ENCODE measurements at regions of chr2 and their contacts with region 1.

Region 1: DNA sequence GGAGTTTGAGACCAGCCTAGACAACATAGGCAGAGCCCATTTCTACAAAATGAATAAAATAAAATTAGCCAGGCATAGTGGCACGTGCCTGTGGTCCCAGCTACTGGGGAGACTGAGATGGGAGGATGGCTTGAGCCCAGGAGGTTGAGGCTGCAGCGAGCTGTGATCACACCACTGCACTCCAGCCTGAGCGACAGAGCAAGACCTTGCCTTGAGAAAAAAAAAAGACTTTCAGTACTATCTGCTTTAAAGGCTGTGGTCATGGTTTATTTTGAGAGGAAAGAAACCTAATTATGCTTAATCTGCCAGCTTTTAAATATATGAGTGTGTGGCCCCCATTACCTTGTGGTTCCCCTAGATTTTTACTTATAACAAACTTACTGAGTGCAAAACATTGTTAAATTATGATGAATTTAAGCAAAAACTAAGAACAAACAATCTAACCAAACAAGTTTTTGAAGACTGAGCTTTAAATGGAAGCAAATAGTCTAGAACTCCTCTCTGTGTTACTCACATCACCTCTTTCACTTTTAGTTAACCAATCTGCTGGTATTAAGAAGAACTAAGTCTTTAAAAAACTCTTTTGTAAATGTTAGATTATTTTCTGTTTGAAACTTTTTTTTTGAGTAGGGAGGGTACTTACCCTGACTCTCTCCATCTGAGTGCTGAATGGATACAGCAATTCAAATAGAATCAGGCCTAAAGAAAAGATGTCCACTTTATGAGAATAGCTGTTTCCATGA is 65.4 kb downstream of the EIF2AK3 start:
- DNase-seq: no peak
- ATAC-seq: no peak
- H3K4me3 ChIP-seq: no peak overlapping the region
- H3K4me3 Mint-ChIP-seq: no peak overlapping the region
- H3K27ac ChIP-seq: no peak overlapping the region
- H3K27ac Mint-ChIP-seq: peak overlapping the region; percentile 34 to 70
- H3K4me1 ChIP-seq: no peaks in the 10 kb centered on the region
- H3K4me1 Mint-ChIP-seq: peaks cover 0 to 3% (median 2%) of the 10 kb centered on the region in 3 donors
- H3K27me3 ChIP-seq: no peaks in the 10 kb centered on the region
- H3K27me3 Mint-ChIP-seq: no peaks in the 10 kb centered on the region

Region 2: GRCh38 chr2:88590998-88591613 is 29.3 kb after region 1 on chr2:
- CTCF ChIA-PET with region 1: no interaction called
- POLR2A ChIA-PET with region 1: no interaction called
- DNase-seq: peak in 24 of 35 experiments; percentile 1 to 71 (median 18)
- ATAC-seq: peak; percentile 60 to 72 (median 64)
- H3K4me3 ChIP-seq: no peak overlapping the region
- H3K4me3 Mint-ChIP-seq: no peak overlapping the region
- H3K27ac ChIP-seq: no peak overlapping the region
- H3K27ac Mint-ChIP-seq: no peak overlapping the region
- H3K4me1 ChIP-seq: no peaks in the 10 kb centered on the region
- H3K4me1 Mint-ChIP-seq: peaks cover 0 to 4% (median 3%) of the 10 kb centered on the region in 3 donors
- H3K27me3 ChIP-seq: no peaks in the 10 kb centered on the region
- H3K27me3 Mint-ChIP-seq: no peaks in the 10 kb centered on the region

Region 3: DNA sequence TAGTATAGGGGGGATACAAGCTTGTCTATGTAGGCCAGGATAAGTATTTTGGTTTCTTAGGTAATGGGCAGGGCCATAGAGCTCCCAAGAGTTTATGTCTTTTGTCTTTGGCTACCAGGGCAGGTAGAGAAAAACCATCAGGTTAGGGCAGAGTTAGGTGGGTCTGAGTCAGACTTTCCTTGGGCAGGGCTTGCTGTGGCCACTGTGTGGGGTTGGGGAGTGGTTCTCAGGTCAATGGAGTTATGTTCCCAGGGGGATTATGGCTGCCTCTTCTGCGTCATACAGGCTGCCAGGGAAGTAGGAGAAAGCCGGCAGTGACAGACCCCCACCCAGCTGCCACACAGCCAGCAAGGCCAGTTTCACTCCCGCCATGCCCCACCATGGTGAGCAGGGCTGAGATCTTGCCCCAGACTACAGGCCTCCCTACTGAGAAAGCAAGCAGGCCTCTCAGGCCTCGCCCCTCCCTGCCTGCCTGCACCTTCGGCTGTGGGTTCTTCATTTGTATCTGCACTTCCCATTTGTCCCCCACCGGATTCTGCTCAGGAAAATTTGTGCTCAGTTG is 185.2 kb after region 1 on chr2:
- CTCF ChIA-PET with region 1: no interaction called
- POLR2A ChIA-PET with region 1: interaction called in 1 of 2 experiments, 13 read pairs
- DNase-seq: no peak
- ATAC-seq: no peak
- H3K4me3 ChIP-seq: no peak overlapping the region
- H3K4me3 Mint-ChIP-seq: peak overlapping the region in 1 of 3 donors; percentile 55
- H3K27ac ChIP-seq: no peak overlapping the region
- H3K27ac Mint-ChIP-seq: peak overlapping the region in 1 of 2 donors; percentile 80
- H3K4me1 ChIP-seq: peaks cover 0 to 6% of the 10 kb centered on the region in 2 experiments
- H3K4me1 Mint-ChIP-seq: peaks cover 36 to 77% (median 42%) of the 10 kb centered on the region in 3 donors
- H3K27me3 ChIP-seq: no peaks in the 10 kb centered on the region
- H3K27me3 Mint-ChIP-seq: no peaks in the 10 kb centered on the region

Measured in T-cell (primary cell).